ENCODE measurements at regions of chr2 and their contacts with region 1.

Region 1: GRCh38 chr2:181305301-181306123 is 151.7 kb upstream of the ITGA4 start:
- DNase-seq: peak; percentile 74
- ATAC-seq: peak; percentile 50
- H3K4me3 ChIP-seq: peak overlapping the region in 2 of 5 experiments; percentile 10 to 68
- H3K4me3 Mint-ChIP-seq: peak overlapping the region; percentile 77
- H3K27ac ChIP-seq: peak overlapping the region; percentile 92 to 97
- H3K27ac Mint-ChIP-seq: peak overlapping the region; percentile 94
- H3K4me1 ChIP-seq: peaks cover 52 to 62% of the 10 kb centered on the region in 2 donors
- H3K4me1 Mint-ChIP-seq: peaks cover 65% of the 10 kb centered on the region
- H3K27me3 ChIP-seq: no peaks in the 10 kb centered on the region
- H3K27me3 Mint-ChIP-seq: no peaks in the 10 kb centered on the region
- CTCF ChIP-seq: no peak

Region 2: DNA sequence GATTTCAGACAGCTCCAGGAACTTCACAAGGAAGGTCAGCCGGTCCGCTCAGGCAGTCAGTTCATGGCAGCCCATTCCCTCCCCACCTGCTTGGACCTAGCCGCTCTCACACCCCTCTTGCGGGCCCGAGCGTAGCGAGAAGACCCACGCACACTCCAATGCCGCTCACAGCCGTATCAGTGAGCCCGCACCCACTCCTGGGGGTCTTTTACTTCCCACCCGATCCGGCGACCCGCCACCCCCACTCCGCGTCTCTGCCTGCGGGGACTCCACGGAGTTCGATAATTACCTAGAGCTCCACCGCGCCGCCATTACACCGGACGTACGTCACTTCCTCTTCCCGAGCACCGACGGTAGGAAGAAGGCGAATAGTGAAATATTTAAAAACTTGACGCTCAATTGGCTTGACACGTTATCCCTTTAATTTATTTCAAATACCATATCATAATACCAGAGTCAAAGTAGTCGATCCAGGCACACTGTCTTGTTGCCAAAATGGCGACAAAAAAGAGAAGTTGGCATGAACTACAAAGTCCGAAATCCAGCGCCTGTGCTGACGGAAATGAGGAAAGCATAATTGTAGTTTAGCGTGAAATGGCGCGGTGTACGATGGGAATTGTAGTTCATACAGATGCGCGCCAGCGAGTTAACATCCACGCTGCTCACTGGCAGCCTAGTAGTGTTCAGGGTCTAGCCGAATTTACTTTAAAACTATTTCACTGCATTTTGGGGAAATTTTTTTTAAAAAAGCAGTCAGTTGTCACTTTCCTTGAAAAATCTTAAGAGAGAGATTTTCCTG is 1298.5 kb before region 1 on chr2 and contains the start of gene CWC22:
- CTCF ChIA-PET with region 1: no interaction called
- POLR2A ChIA-PET with region 1: no interaction called
- intact Hi-C with region 1: loop called (anchors 10 kb)
- DNase-seq: peak; percentile 96
- ATAC-seq: peak; percentile 95
- H3K4me3 ChIP-seq: peak within 1 kb of the TSS; percentile 89 to 98 (median 91)
- H3K4me3 Mint-ChIP-seq: peak within 1 kb of the TSS; percentile 94
- H3K27ac ChIP-seq: peak within 1 kb of the TSS; percentile 88 to 99
- H3K27ac Mint-ChIP-seq: peak within 1 kb of the TSS; percentile 99
- H3K4me1 ChIP-seq: peaks cover 12 to 18% of the 10 kb centered on the region in 2 donors
- H3K4me1 Mint-ChIP-seq: peaks cover 39% of the 10 kb centered on the region
- H3K27me3 ChIP-seq: no peaks in the 10 kb centered on the region
- H3K27me3 Mint-ChIP-seq: no peaks in the 10 kb centered on the region
- CTCF ChIP-seq: no peak
- total RNA-seq, gene CWC22: 28.6 and 28.7 TPM in 2 replicates

Region 3: DNA sequence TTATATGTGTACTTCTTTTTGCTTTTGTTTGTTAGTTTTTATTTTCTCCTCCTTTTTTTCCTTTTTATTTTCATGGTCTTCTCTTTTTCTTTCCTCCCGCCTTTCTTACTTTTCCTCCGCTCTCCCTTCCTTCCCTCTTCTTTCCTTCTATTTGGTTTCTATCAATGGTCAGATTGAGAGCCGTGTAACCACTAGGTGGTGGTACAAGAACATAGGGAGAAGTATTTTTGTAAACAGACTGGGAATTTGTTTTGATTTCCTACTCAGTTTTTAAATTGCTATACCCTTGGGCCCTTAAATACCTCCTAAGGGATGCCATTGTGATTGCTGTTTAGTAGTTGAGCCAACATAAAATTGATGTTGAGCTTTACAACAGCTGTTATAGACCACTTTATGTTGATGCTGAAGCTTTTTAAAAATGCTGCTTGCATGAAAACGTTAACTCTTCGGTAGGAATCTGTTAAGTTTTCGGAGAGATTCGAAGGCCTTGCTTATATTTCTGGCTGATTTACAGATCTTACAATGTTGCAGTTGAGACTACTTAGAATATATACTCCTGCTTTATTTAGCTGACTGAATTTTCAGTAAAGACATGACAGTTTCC is 200.9 kb before region 1 on chr2:
- CTCF ChIA-PET with region 1: interaction called, 14 read pairs
- POLR2A ChIA-PET with region 1: interaction called, 4 read pairs
- intact Hi-C with region 1: loop called (anchors 5 kb)
- DNase-seq: peak; percentile 65
- ATAC-seq: peak; percentile 41
- H3K4me3 ChIP-seq: no peak overlapping the region
- H3K4me3 Mint-ChIP-seq: no peak overlapping the region
- H3K27ac ChIP-seq: no peak overlapping the region
- H3K27ac Mint-ChIP-seq: no peak overlapping the region
- H3K4me1 ChIP-seq: no peaks in the 10 kb centered on the region
- H3K4me1 Mint-ChIP-seq: peaks cover 2% of the 10 kb centered on the region
- H3K27me3 ChIP-seq: no peaks in the 10 kb centered on the region
- H3K27me3 Mint-ChIP-seq: no peaks in the 10 kb centered on the region
- CTCF ChIP-seq: peak; percentile 81

Region 4: DNA sequence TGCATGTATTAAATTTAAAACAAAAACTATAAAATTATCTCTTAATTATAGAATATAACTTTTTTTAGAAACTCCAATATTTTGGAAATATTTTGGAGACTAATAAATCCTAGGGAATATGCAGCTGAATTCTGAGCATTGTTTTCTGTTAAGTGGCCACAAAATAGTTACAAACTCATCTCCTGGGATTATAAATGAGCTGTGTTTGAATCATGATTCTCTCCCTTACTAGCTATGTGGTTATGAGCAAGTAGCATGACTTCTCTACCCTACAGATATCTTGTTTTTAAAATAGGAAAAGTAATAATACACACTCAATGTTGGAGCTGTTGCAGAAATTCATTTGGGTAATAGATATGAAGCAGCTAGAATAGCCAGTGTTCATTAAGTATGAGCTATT is 13.8 kb after region 1 on chr2:
- CTCF ChIA-PET with region 1: interaction called, 28 read pairs
- POLR2A ChIA-PET with region 1: no interaction called
- intact Hi-C with region 1: no loop called
- DNase-seq: no peak
- ATAC-seq: no peak
- H3K4me3 ChIP-seq: no peak overlapping the region
- H3K4me3 Mint-ChIP-seq: no peak overlapping the region
- H3K27ac ChIP-seq: no peak overlapping the region
- H3K27ac Mint-ChIP-seq: no peak overlapping the region
- H3K4me1 ChIP-seq: peaks cover 4 to 19% of the 10 kb centered on the region in 2 donors
- H3K4me1 Mint-ChIP-seq: peaks cover 12% of the 10 kb centered on the region
- H3K27me3 ChIP-seq: no peaks in the 10 kb centered on the region
- H3K27me3 Mint-ChIP-seq: no peaks in the 10 kb centered on the region
- CTCF ChIP-seq: no peak

Region 5: GRCh38 chr2:181430406-181431118 is 125.0 kb after region 1 on chr2:
- CTCF ChIA-PET with region 1: interaction called, 16 read pairs
- POLR2A ChIA-PET with region 1: interaction called, 14 read pairs
- intact Hi-C with region 1: no loop called
- DNase-seq: peak; percentile 69
- ATAC-seq: peak; percentile 75
- H3K4me3 ChIP-seq: no peak overlapping the region
- H3K4me3 Mint-ChIP-seq: no peak overlapping the region
- H3K27ac ChIP-seq: peak overlapping the region; percentile 51 to 60
- H3K27ac Mint-ChIP-seq: peak overlapping the region; percentile 83
- H3K4me1 ChIP-seq: peaks cover 14% of the 10 kb centered on the region in 2 donors
- H3K4me1 Mint-ChIP-seq: peaks cover 18% of the 10 kb centered on the region
- H3K27me3 ChIP-seq: no peaks in the 10 kb centered on the region
- H3K27me3 Mint-ChIP-seq: no peaks in the 10 kb centered on the region
- CTCF ChIP-seq: peak; percentile 79

Region 6: GRCh38 chr2:181466661-181467576 is 161.4 kb after region 1 on chr2:
- CTCF ChIA-PET with region 1: interaction called, 117 read pairs
- POLR2A ChIA-PET with region 1: interaction called, 4 read pairs
- intact Hi-C with region 1: loop called (anchors 1 kb)
- DNase-seq: peak; percentile 84
- ATAC-seq: peak; percentile 52
- H3K4me3 ChIP-seq: no peak overlapping the region
- H3K4me3 Mint-ChIP-seq: no peak overlapping the region
- H3K27ac ChIP-seq: peak overlapping the region in 1 of 2 donors; percentile 69
- H3K27ac Mint-ChIP-seq: no peak overlapping the region
- H3K4me1 ChIP-seq: peaks cover 56 to 81% of the 10 kb centered on the region in 2 donors
- H3K4me1 Mint-ChIP-seq: peaks cover 87% of the 10 kb centered on the region
- H3K27me3 ChIP-seq: no peaks in the 10 kb centered on the region
- H3K27me3 Mint-ChIP-seq: no peaks in the 10 kb centered on the region
- CTCF ChIP-seq: peak; percentile 91

Region 7: DNA sequence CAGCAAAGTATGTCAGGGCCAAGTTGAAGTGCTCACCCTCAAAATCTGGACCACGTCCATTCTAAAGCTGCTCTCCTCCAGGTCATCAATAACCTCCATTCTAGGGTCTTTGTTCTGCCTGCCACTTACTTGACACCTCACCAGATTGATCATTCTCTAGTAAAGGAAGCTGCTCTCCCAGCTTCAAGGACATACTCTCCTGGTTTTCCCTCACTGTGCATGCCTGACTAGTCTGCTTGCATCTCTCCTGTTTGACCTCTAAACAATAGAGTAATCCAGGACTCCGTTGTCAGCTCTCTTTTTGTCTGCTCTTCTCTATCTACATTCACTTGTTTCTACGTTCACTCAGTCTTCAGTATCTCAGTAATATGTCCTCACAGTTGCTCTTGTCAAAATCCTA is 1501.8 kb after region 1 on chr2:
- CTCF ChIA-PET with region 1: no interaction called
- POLR2A ChIA-PET with region 1: no interaction called
- intact Hi-C with region 1: no loop called
- DNase-seq: no peak
- ATAC-seq: no peak
- H3K4me3 ChIP-seq: no peak overlapping the region
- H3K4me3 Mint-ChIP-seq: no peak overlapping the region
- H3K27ac ChIP-seq: no peak overlapping the region
- H3K27ac Mint-ChIP-seq: no peak overlapping the region
- H3K4me1 ChIP-seq: no peaks in the 10 kb centered on the region
- H3K4me1 Mint-ChIP-seq: no peaks in the 10 kb centered on the region
- H3K27me3 ChIP-seq: peaks cover 0 to 20% (median 0%) of the 10 kb centered on the region in 4 experiments
- H3K27me3 Mint-ChIP-seq: peaks cover 30% of the 10 kb centered on the region
- CTCF ChIP-seq: no peak

Measured in B cell (primary cell).